ENCODE measurements at regions of chr4 and their contacts with region 1.

Region 1: GRCh38 chr4:110184140-110184790 is 14.2 kb downstream of the ELOVL6 start:
- DNase-seq: peak in 1 of 2 experiments; percentile 39
- H3K4me3 ChIP-seq: peak overlapping the region in 1 of 4 experiments; percentile 7; a peak in 1 of 8 replicates
- H3K27ac ChIP-seq: no peak overlapping the region
- H3K4me1 ChIP-seq: peaks cover 4 to 12% (median 6%) of the 10 kb centered on the region in 4 experiments; a peak in 5 of 7 replicates
- H3K27me3 ChIP-seq: no peaks in the 10 kb centered on the region
- CTCF ChIP-seq: no peak
- EP300 ChIP-seq: no peak
- POLR2A ChIP-seq: no peak
- RAD21 ChIP-seq: no peak

Region 2: DNA sequence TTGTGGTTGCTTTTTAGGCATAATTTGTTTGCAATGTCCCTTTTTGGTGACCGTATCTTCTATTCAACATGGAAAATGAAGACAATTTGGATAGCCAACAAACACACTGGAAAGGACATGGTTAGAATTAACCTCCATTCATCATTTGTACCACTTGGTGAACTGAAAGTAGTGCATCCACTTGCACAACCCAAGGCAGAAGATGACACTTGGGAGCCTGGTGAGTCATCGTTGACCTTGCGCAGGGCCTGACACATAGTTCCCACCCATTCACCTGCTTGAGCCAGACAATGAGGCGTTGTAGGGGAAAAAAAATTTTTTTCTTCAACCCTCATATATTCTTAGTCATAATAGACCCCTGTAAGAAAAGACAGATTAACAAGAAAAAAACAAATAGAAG is 239.2 kb before region 1 on chr4:
- CTCF ChIA-PET with region 1: no interaction called
- POLR2A ChIA-PET with region 1: no interaction called
- DNase-seq: no peak
- H3K4me3 ChIP-seq: no peak overlapping the region
- H3K27ac ChIP-seq: no peak overlapping the region
- H3K4me1 ChIP-seq: no peaks in the 10 kb centered on the region
- H3K27me3 ChIP-seq: no peaks in the 10 kb centered on the region
- CTCF ChIP-seq: no peak
- EP300 ChIP-seq: no peak
- POLR2A ChIP-seq: no peak
- RAD21 ChIP-seq: no peak

Region 3: DNA sequence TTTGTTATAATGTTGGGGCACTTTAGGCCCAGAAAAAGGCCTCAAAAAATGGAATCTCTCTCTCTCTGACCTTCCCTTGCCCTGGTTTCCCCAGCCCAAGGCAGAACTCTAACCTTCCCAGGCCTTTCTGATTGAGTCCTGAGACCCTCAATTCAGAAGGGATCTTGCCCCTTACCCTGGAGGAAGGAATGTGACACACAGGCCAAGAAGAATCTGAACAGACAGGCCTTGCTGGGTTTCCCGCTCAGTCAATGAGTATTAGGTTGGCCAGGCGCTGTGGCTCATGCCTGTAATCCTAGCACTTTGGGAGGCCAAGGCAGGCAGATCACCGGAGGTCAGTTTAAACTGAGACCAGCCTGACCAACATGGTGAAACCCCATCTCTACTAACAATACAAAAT is 13.4 kb before region 1 on chr4:
- CTCF ChIA-PET with region 1: interaction called, 18 read pairs
- POLR2A ChIA-PET with region 1: interaction called, 7 read pairs
- DNase-seq: no peak
- H3K4me3 ChIP-seq: no peak overlapping the region
- H3K27ac ChIP-seq: no peak overlapping the region
- H3K4me1 ChIP-seq: peaks cover 0 to 1% (median under 1%) of the 10 kb centered on the region in 4 experiments; a peak in 2 of 7 replicates
- H3K27me3 ChIP-seq: no peaks in the 10 kb centered on the region
- CTCF ChIP-seq: peak; percentile 3 to 36 (median 17); a peak in 3 of 4 replicates
- EP300 ChIP-seq: no peak
- POLR2A ChIP-seq: no peak
- RAD21 ChIP-seq: peak in 1 of 2 experiments; percentile 24; a peak in 1 of 4 replicates

Measured in H1 (cell line).